ENCODE measurements at regions of chr12 and their contacts with region 1.

Region 1: DNA sequence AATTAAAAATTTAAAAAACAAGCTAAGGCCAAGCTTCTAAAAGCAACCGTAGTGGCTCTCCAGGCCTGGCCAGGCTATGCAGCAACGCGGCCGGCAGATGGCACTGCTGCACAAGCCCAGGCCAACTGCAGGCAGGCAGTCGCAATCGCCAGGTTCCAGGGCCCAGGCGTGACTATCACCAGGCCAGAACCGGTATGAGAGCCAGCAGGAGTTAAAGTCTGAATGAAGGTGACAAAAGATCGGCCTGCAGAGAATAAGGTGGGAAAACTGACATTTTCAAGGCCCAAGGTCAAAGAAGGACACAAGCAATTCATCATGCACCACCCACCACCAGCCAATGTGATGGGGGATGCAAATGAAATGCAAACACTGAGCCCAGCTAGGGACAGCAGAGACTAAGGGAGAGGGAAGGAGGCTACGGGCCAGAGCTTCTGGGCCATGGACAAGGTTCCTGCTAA is 43.6 kb upstream of the ANO2 start:
- DNase-seq: peak; percentile 66
- H3K4me3 Mint-ChIP-seq: no peak overlapping the region
- H3K27ac Mint-ChIP-seq: no peak overlapping the region
- H3K4me1 Mint-ChIP-seq: no peaks in the 10 kb centered on the region
- H3K27me3 Mint-ChIP-seq: no peaks in the 10 kb centered on the region
- CTCF ChIP-seq: peak; percentile 97

Region 2: DNA sequence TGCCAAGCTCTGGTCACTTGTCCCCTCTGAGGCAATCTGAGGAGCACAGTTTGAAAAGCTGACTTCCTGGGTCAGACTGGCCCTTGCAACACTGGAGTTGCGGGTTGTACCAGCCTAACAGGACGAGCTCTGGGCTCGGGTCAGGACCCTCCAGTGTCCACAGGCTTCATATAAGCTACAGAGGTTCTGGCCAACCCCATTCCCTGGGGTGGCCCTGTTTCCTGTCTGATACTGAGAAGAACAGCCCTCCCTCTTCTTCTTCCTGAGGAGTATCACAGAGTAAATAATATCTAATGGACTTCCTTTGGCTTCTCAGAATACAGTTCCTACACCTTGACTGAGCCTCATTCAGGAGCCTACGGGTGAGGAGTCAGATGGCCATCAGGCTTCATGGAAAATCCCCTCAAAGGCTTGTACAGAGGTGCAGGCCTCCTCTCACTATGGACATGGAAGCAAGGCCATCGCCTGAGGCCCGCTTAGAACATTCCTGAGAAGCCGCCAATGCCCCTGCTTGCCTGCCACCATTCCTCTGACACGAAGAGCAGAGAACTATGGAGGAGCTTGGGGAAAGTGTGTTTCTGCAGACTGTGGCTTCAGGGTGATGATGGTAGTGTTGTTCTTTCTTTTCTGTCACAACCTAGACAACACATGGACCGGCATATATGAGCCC is 15.1 kb before region 1 on chr12:
- CTCF ChIA-PET with region 1: interaction called, 30 read pairs
- POLR2A ChIA-PET with region 1: no interaction called
- intact Hi-C with region 1: no loop called
- DNase-seq: no peak
- H3K4me3 Mint-ChIP-seq: no peak overlapping the region
- H3K27ac Mint-ChIP-seq: no peak overlapping the region
- H3K4me1 Mint-ChIP-seq: no peaks in the 10 kb centered on the region
- H3K27me3 Mint-ChIP-seq: peaks cover 77% of the 10 kb centered on the region
- CTCF ChIP-seq: no peak

Region 3: DNA sequence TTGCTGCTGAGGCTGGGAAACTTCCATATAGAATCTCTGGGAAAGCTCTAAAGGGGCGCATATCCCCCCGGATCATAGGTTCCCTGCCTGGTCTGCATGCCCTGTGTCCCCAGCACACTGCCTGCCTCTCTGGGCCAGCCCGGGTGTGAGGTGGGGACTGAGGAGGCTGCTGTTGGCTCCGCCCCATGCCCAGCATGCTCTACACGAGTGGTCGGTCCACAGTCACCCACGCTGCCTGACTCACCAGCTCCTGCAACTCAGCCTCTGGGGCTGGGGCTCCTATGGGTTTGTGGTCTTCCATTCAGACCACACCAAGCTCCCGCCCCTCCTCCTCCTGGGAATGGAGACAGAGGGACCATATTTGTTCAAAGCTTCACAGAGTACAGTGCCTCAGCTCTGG is 44.9 kb after region 1 on chr12:
- CTCF ChIA-PET with region 1: interaction called, 262 read pairs
- POLR2A ChIA-PET with region 1: interaction called, 4 read pairs
- intact Hi-C with region 1: no loop called
- DNase-seq: no peak
- H3K4me3 Mint-ChIP-seq: no peak overlapping the region
- H3K27ac Mint-ChIP-seq: no peak overlapping the region
- H3K4me1 Mint-ChIP-seq: no peaks in the 10 kb centered on the region
- H3K27me3 Mint-ChIP-seq: peaks cover 10% of the 10 kb centered on the region
- CTCF ChIP-seq: no peak

Region 4: DNA sequence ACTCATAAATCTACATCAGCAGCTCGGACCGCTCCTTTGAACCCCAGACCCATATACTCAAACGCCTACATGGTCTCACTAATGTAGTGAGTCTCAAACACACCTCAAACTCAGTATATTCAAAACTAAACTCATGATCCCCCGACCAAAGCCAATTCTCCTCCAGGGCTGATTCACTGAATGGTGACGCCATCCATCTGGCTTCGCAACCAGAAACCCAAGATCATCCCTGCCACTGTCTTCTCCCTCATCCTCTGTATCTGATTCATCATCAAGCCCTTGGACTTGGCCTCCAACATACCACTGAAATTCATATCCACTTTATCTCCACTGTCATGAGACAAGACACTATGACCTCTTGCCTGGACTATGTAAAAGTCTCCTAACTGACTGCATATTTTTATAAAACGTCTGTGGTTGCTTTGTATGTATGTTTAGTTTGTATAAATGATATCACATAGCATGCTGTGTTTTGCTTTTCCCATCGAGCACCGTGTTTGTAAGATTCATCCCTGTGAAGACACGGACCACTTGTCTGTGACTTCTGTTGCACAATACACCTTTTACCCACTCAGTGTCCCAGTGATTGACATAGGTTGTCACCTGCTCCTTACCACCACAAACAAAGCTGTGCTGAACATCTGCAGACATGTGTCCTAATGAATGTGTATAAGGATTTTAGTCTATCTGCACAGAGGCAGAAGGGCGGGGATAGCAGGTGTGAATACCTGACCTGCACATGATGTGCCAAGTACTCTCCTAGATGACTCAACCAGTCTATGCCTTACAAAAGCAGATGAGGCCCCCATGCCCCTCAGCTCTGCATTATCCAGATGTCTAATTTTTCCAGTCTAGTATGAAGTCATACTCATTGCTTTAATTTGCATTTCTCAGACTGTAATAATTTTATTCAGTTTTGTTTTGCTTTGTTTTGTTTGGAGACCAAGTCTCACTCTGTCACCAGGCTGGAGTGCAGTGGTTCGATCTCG is 58.9 kb after region 1 on chr12:
- CTCF ChIA-PET with region 1: interaction called, 262 read pairs
- POLR2A ChIA-PET with region 1: no interaction called
- intact Hi-C with region 1: no loop called
- DNase-seq: peak; percentile 49
- H3K4me3 Mint-ChIP-seq: no peak overlapping the region
- H3K27ac Mint-ChIP-seq: no peak overlapping the region
- H3K4me1 Mint-ChIP-seq: peaks cover 21% of the 10 kb centered on the region
- H3K27me3 Mint-ChIP-seq: no peaks in the 10 kb centered on the region
- CTCF ChIP-seq: no peak

Region 5: GRCh38 chr12:6278439-6279255 is 290.0 kb after region 1 on chr12:
- CTCF ChIA-PET with region 1: interaction called, 104 read pairs
- POLR2A ChIA-PET with region 1: no interaction called
- intact Hi-C with region 1: no loop called
- DNase-seq: peak; percentile 89
- H3K4me3 Mint-ChIP-seq: peak overlapping the region; percentile 66
- H3K27ac Mint-ChIP-seq: peak overlapping the region; percentile 92
- H3K4me1 Mint-ChIP-seq: peaks cover 44% of the 10 kb centered on the region
- H3K27me3 Mint-ChIP-seq: no peaks in the 10 kb centered on the region
- CTCF ChIP-seq: peak; percentile 94